ENCODE measurements at regions of chr9 and their contacts with region 1.

Region 1: DNA sequence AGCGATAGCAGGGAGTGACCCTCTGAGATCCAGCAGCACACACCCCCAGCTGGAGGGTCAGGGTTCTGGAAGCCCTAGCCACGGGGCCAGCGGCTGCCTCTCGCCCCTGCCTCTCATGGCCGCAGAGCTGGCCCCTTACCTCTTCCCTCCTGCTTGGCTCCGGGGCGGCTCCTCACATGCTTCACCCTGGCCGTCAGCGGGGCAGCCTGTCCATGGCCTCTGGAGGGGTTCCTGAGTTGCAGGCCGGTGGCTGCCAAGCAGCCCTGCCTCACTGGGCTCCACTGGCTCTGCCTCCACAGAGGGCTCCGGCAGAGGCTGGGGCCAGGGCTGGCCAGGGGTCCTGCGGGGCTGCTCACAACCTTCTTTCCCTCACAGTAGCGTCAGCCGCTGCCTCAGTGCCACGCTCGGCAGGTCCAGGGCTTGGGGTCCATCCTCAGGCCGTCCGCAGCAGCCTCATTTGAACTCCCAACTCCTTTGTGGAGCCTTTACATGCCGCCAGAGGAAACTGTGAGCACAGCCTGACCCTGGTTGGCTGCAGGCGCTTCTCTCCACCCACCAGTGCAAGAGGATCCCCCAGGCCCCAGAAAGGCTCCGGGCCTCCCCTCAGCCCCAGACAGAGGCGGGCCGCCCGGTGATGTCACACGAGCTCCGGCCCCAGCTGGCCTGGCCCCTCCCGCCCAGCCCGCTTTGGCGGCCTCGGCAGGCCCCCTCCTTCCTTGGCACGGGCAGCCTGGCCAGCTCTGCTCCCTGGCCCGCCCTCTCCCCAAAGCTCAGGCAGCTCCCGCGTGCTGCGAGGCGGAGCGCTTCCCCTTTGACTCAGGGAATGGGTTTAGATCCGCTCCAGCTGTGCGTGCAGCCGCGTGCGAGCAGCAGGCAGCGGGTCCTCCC is at the start of gene ANGPTL2:
- DNase-seq: peak; percentile 73 to 90
- H3K4me3 ChIP-seq: peak within 1 kb of the TSS; percentile 47 to 69 (median 64)
- H3K27ac ChIP-seq: peak within 1 kb of the TSS; percentile 56
- H3K4me1 ChIP-seq: peaks cover 9 to 17% (median 11%) of the 10 kb centered on the region in 4 experiments
- H3K27me3 ChIP-seq: no peaks in the 10 kb centered on the region; a peak in 2 of 7 replicates
- CTCF ChIP-seq: no peak
- EP300 ChIP-seq: peak in 1 of 2 experiments; percentile 50; a peak in 1 of 3 replicates
- POLR2A ChIP-seq: peak in 1 of 2 experiments; percentile 84; a peak in 2 of 3 replicates
- RAD21 ChIP-seq: no peak; a peak in 1 of 4 replicates
- total RNA-seq, gene ANGPTL2: 10.6 and 10.7 TPM in 2 replicates

Region 2: GRCh38 chr9:127112056-127112455 is 10.4 kb before region 1 on chr9:
- CTCF ChIA-PET with region 1: interaction called, 8 read pairs
- POLR2A ChIA-PET with region 1: interaction called, 15 read pairs
- DNase-seq: peak; percentile 87 to 90
- H3K4me3 ChIP-seq: peak overlapping the region in 1 of 4 experiments; percentile 8; a peak in 1 of 8 replicates
- H3K27ac ChIP-seq: peak overlapping the region; percentile 73; the same call in 1 of the 2 replicates
- H3K4me1 ChIP-seq: peaks cover 6 to 23% (median 16%) of the 10 kb centered on the region in 4 experiments
- H3K27me3 ChIP-seq: no peaks in the 10 kb centered on the region
- CTCF ChIP-seq: no peak
- EP300 ChIP-seq: peak in 1 of 2 experiments; percentile 89; a peak in 1 of 3 replicates
- POLR2A ChIP-seq: peak; percentile 28 to 74
- RAD21 ChIP-seq: peak in 1 of 2 experiments; percentile 5; a peak in 1 of 4 replicates

Region 3: DNA sequence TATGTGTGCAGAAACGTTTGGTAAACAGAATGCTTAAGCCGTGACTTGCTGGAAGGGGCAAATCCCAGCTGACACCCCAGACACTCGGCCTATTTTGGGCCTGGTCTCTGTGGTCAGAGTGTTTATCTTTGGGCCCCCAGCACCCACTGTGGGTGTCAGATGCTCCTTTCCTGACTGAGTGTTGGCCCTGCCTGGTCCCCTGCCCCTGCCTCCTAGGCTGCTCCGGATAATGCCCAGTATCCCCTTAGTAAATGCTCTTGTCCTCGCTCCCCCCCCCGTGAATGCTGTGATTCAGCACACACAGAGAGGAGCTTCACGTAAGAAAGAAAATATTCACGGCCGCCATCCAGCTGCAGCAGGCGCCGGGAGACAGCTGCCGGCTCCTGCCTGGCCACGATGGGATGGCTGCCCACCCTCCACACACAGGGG is 11.3 kb after region 1 on chr9:
- CTCF ChIA-PET with region 1: interaction called, 11 read pairs
- POLR2A ChIA-PET with region 1: interaction called, 12 read pairs
- DNase-seq: no peak
- H3K4me3 ChIP-seq: no peak overlapping the region
- H3K27ac ChIP-seq: no peak overlapping the region
- H3K4me1 ChIP-seq: peaks cover 7 to 16% (median 12%) of the 10 kb centered on the region in 4 experiments
- H3K27me3 ChIP-seq: no peaks in the 10 kb centered on the region; a peak in 2 of 7 replicates
- CTCF ChIP-seq: no peak
- EP300 ChIP-seq: no peak
- POLR2A ChIP-seq: no peak
- RAD21 ChIP-seq: no peak

Region 4: GRCh38 chr9:127205952-127206351 is 83.5 kb after region 1 on chr9:
- CTCF ChIA-PET with region 1: no interaction called
- POLR2A ChIA-PET with region 1: no interaction called
- DNase-seq: no peak
- H3K4me3 ChIP-seq: no peak overlapping the region
- H3K27ac ChIP-seq: no peak overlapping the region
- H3K4me1 ChIP-seq: peaks cover 0 to 8% (median 2%) of the 10 kb centered on the region in 4 experiments; a peak in 4 of 7 replicates
- H3K27me3 ChIP-seq: no peaks in the 10 kb centered on the region
- CTCF ChIP-seq: no peak
- EP300 ChIP-seq: no peak
- POLR2A ChIP-seq: no peak
- RAD21 ChIP-seq: no peak

Measured in H1 (cell line).